Activated naive CD4-positive, alpha-beta T cell treated with anti-CD3 and anti-CD28 coated beads for 36 hours (primary cell): ENCODE measurements at regions of chr3 and their contacts with region 1.

Region 1: GRCh38 chr3:60313951-60314461 is 937.2 kb downstream of the FHIT start:
- DNase-seq: no peak
- H3K4me3 Mint-ChIP-seq: no peak overlapping the region
- H3K27ac Mint-ChIP-seq: no peak overlapping the region
- H3K4me1 Mint-ChIP-seq: peaks cover 15% of the 10 kb centered on the region
- H3K27me3 Mint-ChIP-seq: no peaks in the 10 kb centered on the region

Region 2: DNA sequence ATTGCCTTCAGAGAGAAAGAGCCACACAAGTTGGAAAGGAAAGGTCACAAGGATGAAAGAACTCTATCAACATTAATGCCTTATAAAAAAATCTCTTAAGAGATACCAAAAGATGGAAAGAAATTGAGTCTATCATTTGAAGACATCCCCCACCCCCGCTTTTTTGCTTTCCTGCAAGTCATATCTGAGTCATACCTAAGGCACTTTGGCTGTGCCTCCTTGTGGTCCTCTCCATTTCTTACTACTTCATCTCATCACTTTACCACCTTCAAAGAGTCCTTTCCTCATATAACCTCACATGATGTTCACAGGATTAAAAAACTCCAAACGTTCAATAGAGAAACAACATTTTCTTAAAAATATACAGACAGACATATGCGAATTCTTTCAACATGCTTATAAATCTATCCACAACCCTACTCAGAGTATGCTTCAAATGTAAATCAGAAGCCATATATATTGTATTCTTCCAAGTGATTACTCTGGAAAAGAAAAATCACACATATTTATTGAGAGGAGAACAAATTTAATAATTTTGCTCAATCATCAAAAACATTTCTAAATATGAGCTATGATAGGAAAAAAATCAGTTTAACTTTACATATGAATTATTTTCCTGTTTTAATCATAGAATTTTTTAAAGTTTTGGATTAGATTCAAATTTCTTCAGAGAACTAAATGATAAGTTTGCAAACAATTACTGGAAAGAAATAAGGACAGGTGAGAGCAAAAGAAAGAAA is 260.3 kb before region 1 on chr3:
- CTCF ChIA-PET with region 1: no interaction called
- intact Hi-C with region 1: no loop called
- DNase-seq: peak; percentile 80
- H3K4me3 Mint-ChIP-seq: peak overlapping the region; percentile 32
- H3K27ac Mint-ChIP-seq: peak overlapping the region; percentile 92
- H3K4me1 Mint-ChIP-seq: peaks cover 86% of the 10 kb centered on the region
- H3K27me3 Mint-ChIP-seq: no peaks in the 10 kb centered on the region

Region 3: GRCh38 chr3:60192297-60193114 is 121.5 kb before region 1 on chr3:
- CTCF ChIA-PET with region 1: no interaction called
- intact Hi-C with region 1: loop called (anchors 1 kb)
- DNase-seq: peak; percentile 58
- H3K4me3 Mint-ChIP-seq: no peak overlapping the region
- H3K27ac Mint-ChIP-seq: no peak overlapping the region
- H3K4me1 Mint-ChIP-seq: peaks cover 28% of the 10 kb centered on the region
- H3K27me3 Mint-ChIP-seq: no peaks in the 10 kb centered on the region